ENCODE measurements at regions of chr17 and their contacts with region 1.

Region 1: GRCh38 chr17:68435876-68436842 is 21.1 kb downstream of the WIPI1 start:
- DNase-seq: peak; percentile 71 to 91 (median 87)
- ATAC-seq: peak; percentile 83
- H3K4me3 ChIP-seq: no peak overlapping the region
- H3K4me3 Mint-ChIP-seq: peak overlapping the region; percentile 51
- H3K27ac ChIP-seq: no peak overlapping the region
- H3K27ac Mint-ChIP-seq: peak overlapping the region; percentile 81
- H3K4me1 ChIP-seq: peaks cover 30% of the 10 kb centered on the region
- H3K4me1 Mint-ChIP-seq: peaks cover 50% of the 10 kb centered on the region
- H3K27me3 ChIP-seq: no peaks in the 10 kb centered on the region
- H3K27me3 Mint-ChIP-seq: no peaks in the 10 kb centered on the region
- CTCF ChIP-seq: peak; percentile 96

Region 2: DNA sequence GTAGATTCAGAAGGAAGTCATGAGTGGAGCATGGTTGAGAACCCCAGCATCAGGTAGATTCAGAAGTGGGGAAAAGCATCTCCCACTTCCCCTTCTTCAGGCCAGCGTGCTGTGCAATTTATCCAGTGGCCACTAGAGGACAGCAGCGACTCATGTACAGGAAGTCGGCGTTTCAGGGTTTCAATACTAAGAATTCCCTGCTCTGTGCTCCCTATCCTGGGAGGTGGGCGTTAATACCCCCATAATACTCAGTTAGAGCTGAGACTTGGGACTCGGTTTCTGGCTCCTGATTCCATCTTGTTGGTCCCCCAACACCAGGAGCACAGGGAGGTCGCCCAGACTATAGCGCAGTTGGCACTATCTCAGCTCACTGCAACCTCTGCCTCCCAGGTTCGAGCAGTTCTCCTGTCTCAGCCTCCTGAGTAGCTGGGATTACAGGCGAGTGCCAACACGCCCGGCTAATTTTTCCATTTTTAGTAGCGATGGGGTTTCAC is 263.7 kb before region 1 on chr17:
- CTCF ChIA-PET with region 1: interaction called, 6 read pairs
- POLR2A ChIA-PET with region 1: no interaction called
- intact Hi-C with region 1: loop called (anchors 1 to 2 kb)
- DNase-seq: peak; percentile 54 to 85 (median 80)
- ATAC-seq: peak; percentile 81
- H3K4me3 ChIP-seq: no peak overlapping the region
- H3K4me3 Mint-ChIP-seq: no peak overlapping the region
- H3K27ac ChIP-seq: no peak overlapping the region
- H3K27ac Mint-ChIP-seq: no peak overlapping the region
- H3K4me1 ChIP-seq: peaks cover 19% of the 10 kb centered on the region
- H3K4me1 Mint-ChIP-seq: peaks cover 37% of the 10 kb centered on the region
- H3K27me3 ChIP-seq: no peaks in the 10 kb centered on the region
- H3K27me3 Mint-ChIP-seq: no peaks in the 10 kb centered on the region
- CTCF ChIP-seq: peak; percentile 99

Region 3: DNA sequence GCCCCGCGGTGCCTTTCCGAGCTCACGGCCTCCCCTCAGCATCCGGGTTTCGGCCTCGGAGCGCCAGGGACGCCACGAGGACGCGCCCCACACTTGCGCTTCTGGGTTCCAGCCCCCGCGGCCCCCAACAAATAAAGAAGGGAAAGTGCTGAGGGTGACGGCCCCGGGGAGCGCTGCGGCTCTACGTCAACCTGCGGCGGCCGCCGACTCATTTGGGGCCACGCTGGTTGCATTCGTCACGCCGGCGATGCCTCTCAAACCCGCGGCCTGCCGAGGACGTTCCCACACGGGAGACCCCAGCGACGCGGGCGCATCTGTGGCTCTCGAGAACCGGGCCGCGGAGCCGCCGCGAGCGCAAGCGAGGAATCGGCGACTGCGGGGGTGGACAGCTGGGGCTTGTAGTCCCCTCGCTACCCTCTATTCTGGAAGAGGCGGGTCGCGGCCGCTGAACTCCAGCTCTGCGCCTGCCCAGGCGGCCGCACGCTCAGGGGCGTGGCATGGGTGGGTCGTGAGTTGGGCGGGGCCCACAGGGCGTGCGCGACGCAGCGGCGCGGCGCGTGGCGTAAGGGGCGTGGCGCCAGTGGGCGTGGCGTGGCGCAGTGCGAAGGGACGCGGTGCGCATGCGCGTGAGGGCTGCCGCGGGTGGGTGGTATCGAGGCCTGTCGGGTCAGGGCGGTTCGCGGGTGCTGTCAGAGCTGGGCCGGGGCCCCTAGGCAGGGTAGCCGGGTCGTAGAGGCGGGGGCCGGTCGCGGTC is 188.5 kb before region 1 on chr17 and contains the start of gene AMZ2:
- CTCF ChIA-PET with region 1: interaction called, 9 read pairs
- POLR2A ChIA-PET with region 1: interaction called, 16 read pairs
- intact Hi-C with region 1: no loop called
- DNase-seq: peak; percentile 94 to 99 (median 98)
- ATAC-seq: peak; percentile 91
- H3K4me3 ChIP-seq: peak within 1 kb of the TSS; percentile 70 to 94
- H3K4me3 Mint-ChIP-seq: peak within 1 kb of the TSS; percentile 96
- H3K27ac ChIP-seq: peak within 1 kb of the TSS; percentile 93 to 96
- H3K27ac Mint-ChIP-seq: peak within 1 kb of the TSS; percentile 98
- H3K4me1 ChIP-seq: peaks cover 34% of the 10 kb centered on the region
- H3K4me1 Mint-ChIP-seq: peaks cover 42% of the 10 kb centered on the region
- H3K27me3 ChIP-seq: no peaks in the 10 kb centered on the region
- H3K27me3 Mint-ChIP-seq: no peaks in the 10 kb centered on the region
- CTCF ChIP-seq: no peak
- total RNA-seq, gene AMZ2: 61.0 to 71.1 TPM

Region 4: GRCh38 chr17:68346448-68346847 is 89.7 kb before region 1 on chr17:
- CTCF ChIA-PET with region 1: interaction called, 4 read pairs
- POLR2A ChIA-PET with region 1: no interaction called
- intact Hi-C with region 1: loop called in 1 of 2 experiments (anchors 1 kb)
- DNase-seq: peak; percentile 22 to 85 (median 67)
- ATAC-seq: peak; percentile 75
- H3K4me3 ChIP-seq: peak overlapping the region; percentile 26 to 30
- H3K4me3 Mint-ChIP-seq: peak overlapping the region; percentile 69
- H3K27ac ChIP-seq: peak overlapping the region; percentile 41 to 62
- H3K27ac Mint-ChIP-seq: peak overlapping the region; percentile 92
- H3K4me1 ChIP-seq: peaks cover 64% of the 10 kb centered on the region
- H3K4me1 Mint-ChIP-seq: peaks cover 72% of the 10 kb centered on the region
- H3K27me3 ChIP-seq: no peaks in the 10 kb centered on the region
- H3K27me3 Mint-ChIP-seq: no peaks in the 10 kb centered on the region
- CTCF ChIP-seq: no peak

Region 5: GRCh38 chr17:68418876-68419275 is 17.3 kb before region 1 on chr17:
- CTCF ChIA-PET with region 1: interaction called, 19 read pairs
- POLR2A ChIA-PET with region 1: interaction called, 3 read pairs
- intact Hi-C with region 1: loop called in 1 of 2 experiments (anchors 2 kb)
- DNase-seq: no peak
- ATAC-seq: no peak
- H3K4me3 ChIP-seq: no peak overlapping the region
- H3K4me3 Mint-ChIP-seq: no peak overlapping the region
- H3K27ac ChIP-seq: no peak overlapping the region
- H3K27ac Mint-ChIP-seq: no peak overlapping the region
- H3K4me1 ChIP-seq: peaks cover 22% of the 10 kb centered on the region
- H3K4me1 Mint-ChIP-seq: peaks cover 29% of the 10 kb centered on the region
- H3K27me3 ChIP-seq: no peaks in the 10 kb centered on the region
- H3K27me3 Mint-ChIP-seq: no peaks in the 10 kb centered on the region
- CTCF ChIP-seq: no peak